ENCODE measurements at regions of chr22 and their contacts with region 1.

Region 1: GRCh38 chr22:27804470-27805297 is 3.1 kb upstream of the MN1 start:
- DNase-seq: peak; percentile 89
- H3K4me3 ChIP-seq: no peak overlapping the region
- H3K27ac ChIP-seq: no peak overlapping the region
- H3K4me1 ChIP-seq: peaks cover 16% of the 10 kb centered on the region
- H3K27me3 ChIP-seq: no peaks in the 10 kb centered on the region
- CTCF ChIP-seq: peak; percentile 85

Region 2: GRCh38 chr22:26672590-26673468 is 1131.9 kb before region 1 on chr22:
- CTCF ChIA-PET with region 1: no interaction called
- POLR2A ChIA-PET with region 1: no interaction called
- intact Hi-C with region 1: loop called (anchors 10 kb)
- DNase-seq: peak; percentile 99
- H3K4me3 ChIP-seq: peak overlapping the region; percentile 72
- H3K27ac ChIP-seq: peak overlapping the region; percentile 92
- H3K4me1 ChIP-seq: peaks cover 8% of the 10 kb centered on the region
- H3K27me3 ChIP-seq: no peaks in the 10 kb centered on the region
- CTCF ChIP-seq: peak; percentile 63

Region 3: GRCh38 chr22:26756675-26757293 is 1047.9 kb before region 1 on chr22:
- CTCF ChIA-PET with region 1: no interaction called
- POLR2A ChIA-PET with region 1: no interaction called
- intact Hi-C with region 1: loop called (anchors 2 kb)
- DNase-seq: peak; percentile 69
- H3K4me3 ChIP-seq: no peak overlapping the region
- H3K27ac ChIP-seq: no peak overlapping the region
- H3K4me1 ChIP-seq: no peaks in the 10 kb centered on the region
- H3K27me3 ChIP-seq: no peaks in the 10 kb centered on the region
- CTCF ChIP-seq: peak; percentile 81

Region 4: GRCh38 chr22:26903030-26903856 is 901.4 kb before region 1 on chr22:
- CTCF ChIA-PET with region 1: no interaction called
- POLR2A ChIA-PET with region 1: no interaction called
- intact Hi-C with region 1: loop called (anchors 10 kb)
- DNase-seq: peak; percentile 83
- H3K4me3 ChIP-seq: peak overlapping the region; percentile 27
- H3K27ac ChIP-seq: peak overlapping the region; percentile 97
- H3K4me1 ChIP-seq: peaks cover 43% of the 10 kb centered on the region
- H3K27me3 ChIP-seq: no peaks in the 10 kb centered on the region
- CTCF ChIP-seq: no peak

Region 5: DNA sequence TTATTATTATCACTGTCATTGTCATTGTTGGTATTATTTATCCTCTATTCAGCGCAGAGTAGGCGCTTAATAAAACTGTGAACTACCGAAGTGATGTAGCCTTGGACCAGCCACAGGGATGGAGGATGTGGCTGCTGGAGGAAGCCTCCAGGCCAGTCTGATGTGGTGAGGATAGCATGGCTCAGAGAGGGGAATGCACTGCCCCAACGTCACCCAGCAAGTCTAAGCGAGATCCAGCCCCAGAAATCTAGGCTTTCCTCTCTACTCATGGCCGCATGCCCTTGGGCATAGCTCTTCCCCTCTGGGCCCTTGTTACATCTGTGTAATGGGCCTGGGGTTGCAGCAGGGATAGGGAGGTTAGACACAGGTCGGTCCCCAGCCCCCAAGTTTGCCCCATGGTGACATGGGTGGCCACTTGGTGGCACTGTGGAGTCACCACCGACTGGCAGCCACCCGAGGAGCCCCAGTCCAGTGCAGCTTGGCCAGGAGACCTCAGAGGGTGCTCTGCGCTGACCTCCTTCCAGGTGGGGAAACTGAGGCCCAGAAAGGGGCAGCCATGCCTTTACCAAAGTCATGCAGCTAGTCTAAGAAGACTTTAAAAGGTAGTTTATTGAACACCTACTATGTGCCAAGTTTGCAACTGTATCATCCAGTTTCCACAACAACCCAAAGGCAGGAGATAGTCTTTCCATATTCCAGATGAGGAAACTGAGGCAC is 398.9 kb before region 1 on chr22:
- CTCF ChIA-PET with region 1: interaction called, 3 read pairs
- POLR2A ChIA-PET with region 1: no interaction called
- intact Hi-C with region 1: loop called (anchors 5 kb)
- DNase-seq: peak; percentile 58
- H3K4me3 ChIP-seq: no peak overlapping the region
- H3K27ac ChIP-seq: no peak overlapping the region
- H3K4me1 ChIP-seq: peaks cover 16% of the 10 kb centered on the region
- H3K27me3 ChIP-seq: no peaks in the 10 kb centered on the region
- CTCF ChIP-seq: peak; percentile 78

Region 6: GRCh38 chr22:27554106-27554811 is 250.4 kb before region 1 on chr22:
- CTCF ChIA-PET with region 1: no interaction called
- POLR2A ChIA-PET with region 1: interaction called, 3 read pairs
- intact Hi-C with region 1: loop called (anchors 10 kb)
- DNase-seq: peak; percentile 94
- H3K4me3 ChIP-seq: no peak overlapping the region
- H3K27ac ChIP-seq: peak overlapping the region; percentile 68
- H3K4me1 ChIP-seq: peaks cover 15% of the 10 kb centered on the region
- H3K27me3 ChIP-seq: no peaks in the 10 kb centered on the region
- CTCF ChIP-seq: no peak

Region 7: DNA sequence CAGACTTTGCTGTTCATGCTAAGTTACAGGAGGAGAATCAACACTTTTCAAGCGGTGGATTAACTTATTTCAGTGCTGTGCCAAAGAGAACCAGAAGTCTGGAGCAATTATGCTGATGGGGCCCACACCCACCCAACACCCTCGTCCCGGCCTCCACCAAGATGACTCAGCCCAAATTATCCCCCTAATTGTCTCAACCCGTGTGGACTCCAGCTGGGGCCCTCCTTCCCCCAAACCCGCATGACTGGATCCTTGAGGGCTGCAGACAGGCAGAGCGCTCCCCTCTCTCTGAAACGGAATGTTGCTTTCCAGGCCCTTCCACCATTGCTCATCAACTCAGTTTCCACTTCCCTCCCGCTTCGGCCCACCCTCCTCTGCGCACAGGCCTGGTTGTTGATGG is 31.5 kb after region 1 on chr22:
- CTCF ChIA-PET with region 1: no interaction called
- POLR2A ChIA-PET with region 1: no interaction called
- intact Hi-C with region 1: no loop called
- DNase-seq: peak; percentile 89
- H3K4me3 ChIP-seq: no peak overlapping the region
- H3K27ac ChIP-seq: peak overlapping the region; percentile 9
- H3K4me1 ChIP-seq: peaks cover 21% of the 10 kb centered on the region
- H3K27me3 ChIP-seq: no peaks in the 10 kb centered on the region
- CTCF ChIP-seq: no peak

Measured in A673 (cell line).